ENCODE measurements at regions of chr11 and their contacts with region 1.

Region 1: DNA sequence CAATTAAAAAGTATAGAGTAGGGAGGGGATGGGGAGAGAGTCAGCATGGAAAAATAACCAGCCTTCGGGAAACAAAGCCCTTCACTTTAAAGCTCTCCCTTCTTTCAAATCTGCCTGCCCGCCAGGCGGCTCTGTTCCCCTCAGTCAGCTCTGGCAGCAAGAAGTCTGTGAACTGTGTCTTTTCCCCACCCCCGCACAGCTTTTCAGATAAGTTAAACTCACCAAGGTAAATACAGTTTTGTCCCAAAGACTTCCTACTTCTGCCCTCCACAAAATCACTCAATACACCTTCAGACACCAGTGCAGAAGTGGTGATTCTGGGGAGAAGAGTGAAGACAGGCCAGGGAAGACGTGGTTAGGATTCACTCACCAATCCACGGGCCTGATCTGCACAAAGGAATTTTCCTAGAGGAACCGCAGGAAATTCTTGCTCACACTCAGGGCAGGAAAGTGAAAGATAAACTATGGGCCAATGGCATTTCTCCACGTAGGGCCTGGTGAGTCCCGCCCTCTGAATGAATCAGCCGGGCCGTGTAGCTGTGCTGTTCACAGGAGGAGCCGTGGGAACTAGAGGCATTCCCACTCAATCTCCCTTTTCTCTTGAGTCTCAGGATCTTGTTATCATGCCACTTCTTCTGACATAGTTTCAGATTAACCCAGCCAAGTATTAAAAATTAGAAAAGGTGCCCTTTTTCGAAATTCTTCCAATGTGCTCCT is at the start of gene TRIM5:
- DNase-seq: peak; percentile 90 to 92
- ATAC-seq: peak; percentile 97
- H3K4me3 ChIP-seq: peak within 1 kb of the TSS; percentile 81 to 88
- H3K27ac ChIP-seq: peak within 1 kb of the TSS; percentile 97 to 98
- H3K4me1 ChIP-seq: no peaks in the 10 kb centered on the region
- H3K27me3 ChIP-seq: no peaks in the 10 kb centered on the region
- total RNA-seq, gene TRIM5: 38.8 to 42.0 TPM

Region 2: DNA sequence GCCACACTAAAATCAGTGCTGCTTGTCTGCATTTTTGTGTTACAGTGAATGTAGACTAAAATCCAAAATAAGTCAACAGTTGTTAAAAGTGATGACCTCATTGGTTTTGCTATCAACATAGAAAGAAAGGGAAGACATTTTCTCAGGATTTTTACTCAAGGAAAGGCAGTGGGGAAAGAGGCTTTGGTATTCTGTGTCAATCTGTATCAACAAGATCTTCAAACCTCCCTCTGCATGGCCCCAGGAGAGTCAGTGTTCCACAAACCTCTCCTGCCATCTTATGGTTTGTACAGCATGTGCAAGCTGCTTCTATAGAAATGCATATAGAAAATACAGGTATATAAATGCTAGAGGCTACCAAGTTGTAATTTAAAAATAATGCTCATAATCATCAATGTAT is 315.0 kb before region 1 on chr11:
- intact Hi-C with region 1: no loop called
- DNase-seq: no peak
- ATAC-seq: no peak
- H3K4me3 ChIP-seq: no peak overlapping the region
- H3K27ac ChIP-seq: no peak overlapping the region
- H3K4me1 ChIP-seq: peaks cover 0 to 8% of the 10 kb centered on the region in 2 donors
- H3K27me3 ChIP-seq: no peaks in the 10 kb centered on the region

Region 3: DNA sequence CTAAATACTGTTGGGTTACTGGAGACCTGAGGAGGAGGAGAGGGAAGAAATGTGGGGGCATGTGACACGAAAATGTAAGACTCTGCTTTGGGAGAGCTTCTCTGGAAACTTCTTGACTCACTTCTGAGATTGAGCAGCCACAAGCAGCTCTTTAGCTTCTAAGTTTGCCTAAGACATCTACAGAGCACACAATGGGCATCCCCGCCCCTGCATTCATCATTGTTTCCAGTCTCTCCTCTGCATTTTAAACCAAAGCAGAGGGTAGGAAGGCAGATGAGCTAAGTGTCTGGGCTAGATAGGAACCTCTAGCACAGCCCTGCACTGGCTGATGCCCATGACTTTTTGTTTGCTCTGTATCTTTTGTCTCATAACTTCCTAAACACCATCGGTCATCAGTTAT is 198.4 kb before region 1 on chr11:
- intact Hi-C with region 1: no loop called
- DNase-seq: no peak
- ATAC-seq: no peak
- H3K4me3 ChIP-seq: no peak overlapping the region
- H3K27ac ChIP-seq: no peak overlapping the region
- H3K4me1 ChIP-seq: no peaks in the 10 kb centered on the region
- H3K27me3 ChIP-seq: no peaks in the 10 kb centered on the region

Region 4: DNA sequence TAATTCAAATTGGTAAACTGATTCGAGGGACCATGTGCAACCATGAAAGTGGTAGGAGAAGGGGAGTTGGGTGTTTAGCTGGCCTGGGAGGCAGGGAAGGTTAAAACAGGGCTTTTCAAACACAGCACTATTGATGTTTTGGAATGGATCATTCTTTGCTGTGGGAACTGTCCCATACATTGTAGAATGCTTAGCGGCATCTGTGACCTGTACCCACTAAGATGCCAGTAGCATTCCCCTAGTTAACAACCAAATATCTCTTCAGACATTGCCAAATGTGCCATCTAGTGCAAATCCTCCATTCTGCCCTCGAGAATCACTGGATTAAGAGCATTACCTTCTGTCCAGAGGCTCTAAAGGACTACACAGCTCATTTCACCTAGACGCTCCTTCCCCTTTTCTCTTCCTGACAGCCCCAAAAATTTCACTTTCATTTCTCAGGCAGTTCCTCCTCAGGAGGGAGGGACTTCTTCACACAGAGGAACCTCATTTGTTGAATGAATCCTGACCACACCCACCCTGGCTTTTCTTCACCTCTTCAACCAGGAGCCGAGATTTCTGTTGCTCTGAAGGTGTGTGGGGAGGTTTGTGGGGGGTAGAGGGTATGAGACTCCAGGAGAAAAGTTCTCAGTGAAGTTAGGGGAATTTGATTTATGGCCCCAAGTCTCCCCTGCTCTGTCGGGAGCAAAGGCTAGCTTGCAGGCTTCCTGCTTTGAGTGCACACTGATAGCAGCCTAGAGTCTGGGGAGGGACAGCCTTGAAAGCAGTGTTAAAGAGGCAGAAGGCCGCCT is 60.1 kb before region 1 on chr11 and contains the start of gene TRIM34:
- intact Hi-C with region 1: loop called in 1 of 2 experiments (anchors 10 kb)
- DNase-seq: peak in 1 of 2 donors; percentile 52
- ATAC-seq: peak; percentile 87
- H3K4me3 ChIP-seq: peak within 1 kb of the TSS; percentile 71 to 85
- H3K27ac ChIP-seq: peak within 1 kb of the TSS in 1 of 2 donors; percentile 52
- H3K4me1 ChIP-seq: peaks cover 4 to 16% of the 10 kb centered on the region in 2 donors
- H3K27me3 ChIP-seq: no peaks in the 10 kb centered on the region
- total RNA-seq, gene TRIM34: 5.6 to 9.2 TPM